AG04450 (cell line): ENCODE measurements at regions of chr20 and their contacts with region 1.

Region 1: DNA sequence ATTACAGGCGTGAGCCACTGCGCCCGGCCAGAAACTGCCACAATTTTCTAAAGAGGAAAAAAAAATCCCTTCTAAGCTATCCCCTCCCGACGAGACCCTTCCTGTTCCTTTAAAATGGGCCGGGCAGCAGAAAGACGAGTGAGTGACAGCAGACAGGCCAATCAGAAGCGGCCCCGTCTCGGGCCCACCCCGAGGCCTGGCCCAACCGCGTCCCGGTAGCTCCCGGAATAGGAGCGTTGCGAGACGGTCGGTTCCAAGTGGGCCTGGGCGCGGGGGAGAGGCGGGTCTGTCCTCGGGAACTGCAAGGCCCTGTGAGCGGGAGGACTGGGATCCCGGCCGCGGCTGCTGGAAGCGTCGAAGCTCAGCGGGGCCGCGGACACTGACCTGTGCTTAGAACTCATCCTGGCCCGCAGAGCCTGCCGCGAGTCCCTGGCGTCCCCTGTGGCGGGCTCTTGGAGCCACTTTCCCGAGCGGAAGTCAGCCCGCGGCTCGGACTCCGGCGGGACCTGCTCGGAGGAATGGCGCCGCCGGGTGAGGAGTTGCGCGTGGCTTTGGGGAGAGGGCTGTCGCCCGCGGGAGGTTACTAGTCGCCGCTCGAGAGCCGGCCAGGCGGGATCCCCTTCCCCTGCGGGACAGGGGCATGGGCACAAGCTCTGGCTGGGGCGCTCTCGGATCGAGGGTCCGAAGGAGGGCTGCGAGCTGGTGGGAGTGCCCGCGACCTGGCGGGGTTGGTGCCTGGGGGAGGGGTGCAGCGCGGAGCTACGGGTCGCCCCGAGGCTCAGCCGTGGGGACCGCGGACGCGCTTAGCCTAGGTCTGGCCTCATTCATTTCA is at the starts of genes MROH8 and RPN2:
- DNase-seq: peak; percentile 97
- H3K4me3 ChIP-seq: peak within 1 kb of the TSS; percentile 88
- H3K27ac ChIP-seq: peak within 1 kb of the TSS; percentile 98
- H3K27me3 ChIP-seq: no peaks in the 10 kb centered on the region
- CTCF ChIP-seq: no peak
- polyA plus RNA-seq, gene MROH8: 2.5 TPM in 2 replicates
- polyA plus RNA-seq, gene RPN2: 488 and 495 TPM in 2 replicates

Region 2: DNA sequence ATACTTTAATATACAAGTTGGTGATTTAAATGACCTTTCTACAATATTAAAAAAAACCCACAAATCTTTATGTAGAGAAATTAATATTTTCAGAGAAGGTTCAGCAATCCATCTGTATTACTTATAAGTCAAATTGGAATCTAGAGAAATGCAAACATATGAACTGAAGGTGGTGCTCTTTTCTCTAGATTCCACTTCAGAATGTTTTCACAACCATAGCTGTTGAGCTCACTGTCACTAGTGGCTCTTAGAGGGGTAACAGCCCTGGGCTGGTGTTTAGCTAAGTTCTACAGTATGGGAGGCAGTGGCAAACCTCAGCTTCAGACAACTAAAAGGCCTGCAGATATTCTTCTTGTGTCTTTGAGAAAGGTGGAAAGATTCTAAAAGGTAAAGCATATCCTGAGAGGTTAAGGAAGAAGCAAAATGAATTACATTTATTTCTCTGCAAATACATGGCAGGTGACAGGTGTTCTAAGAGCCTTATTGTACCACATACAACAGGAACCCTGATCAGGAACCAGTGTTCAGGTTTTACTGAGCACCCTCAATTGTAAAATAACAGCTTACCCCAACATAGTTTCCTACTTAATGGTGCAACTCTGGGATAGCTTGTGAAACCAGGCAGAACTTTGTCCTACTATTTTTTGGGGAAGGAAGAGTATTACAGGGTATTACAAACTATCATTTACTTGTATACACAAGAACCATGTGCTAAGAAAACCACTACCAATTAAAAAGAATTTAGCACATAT is 171.0 kb before region 1 on chr20:
- CTCF ChIA-PET with region 1: interaction called, 17 read pairs
- POLR2A ChIA-PET with region 1: interaction called, 6 read pairs
- DNase-seq: no peak
- H3K4me3 ChIP-seq: no peak overlapping the region
- H3K27ac ChIP-seq: no peak overlapping the region
- H3K27me3 ChIP-seq: no peaks in the 10 kb centered on the region
- CTCF ChIP-seq: peak; percentile 33; the same call in 1 of the 2 replicates

Region 3: DNA sequence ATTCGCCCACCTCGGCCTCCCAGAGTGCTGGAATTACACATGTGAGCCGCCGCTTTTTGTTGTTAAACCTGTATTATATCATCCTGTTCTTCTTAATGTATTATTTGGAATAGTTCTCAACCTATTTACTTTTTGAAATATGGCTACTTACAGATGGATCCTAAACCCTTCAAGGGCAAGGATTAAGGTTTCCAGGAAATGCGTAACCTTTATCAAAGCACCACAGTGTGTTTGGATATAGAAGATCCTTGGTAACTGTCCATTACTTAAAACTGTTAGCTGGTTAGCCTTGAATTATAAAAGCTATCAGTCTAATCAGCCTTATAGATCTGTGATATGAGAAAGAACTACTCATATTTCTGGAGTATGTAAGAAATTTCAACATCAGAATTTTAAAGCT is 12.2 kb before region 1 on chr20:
- CTCF ChIA-PET with region 1: no interaction called
- POLR2A ChIA-PET with region 1: interaction called, 11 read pairs
- DNase-seq: no peak
- H3K4me3 ChIP-seq: no peak overlapping the region
- H3K27ac ChIP-seq: no peak overlapping the region
- H3K27me3 ChIP-seq: no peaks in the 10 kb centered on the region
- CTCF ChIP-seq: no peak

Region 4: GRCh38 chr20:37238935-37239451 is 59.9 kb after region 1 on chr20:
- CTCF ChIA-PET with region 1: no interaction called
- POLR2A ChIA-PET with region 1: no interaction called
- DNase-seq: no peak
- H3K4me3 ChIP-seq: no peak overlapping the region
- H3K27ac ChIP-seq: no peak overlapping the region
- H3K27me3 ChIP-seq: no peaks in the 10 kb centered on the region
- CTCF ChIP-seq: no peak

Region 5: GRCh38 chr20:37498066-37498665 is 319.1 kb after region 1 on chr20:
- CTCF ChIA-PET with region 1: no interaction called
- POLR2A ChIA-PET with region 1: no interaction called
- DNase-seq: no peak
- H3K4me3 ChIP-seq: no peak overlapping the region
- H3K27ac ChIP-seq: no peak overlapping the region
- H3K27me3 ChIP-seq: no peaks in the 10 kb centered on the region
- CTCF ChIP-seq: no peak